ENCODE measurements at regions of chr2 and their contacts with region 1.

Region 1: GRCh38 chr2:175030380-175031271 is 25.4 kb upstream of the CHN1 start:
- DNase-seq: peak; percentile 13 to 63
- H3K4me3 ChIP-seq: no peak overlapping the region
- H3K27ac ChIP-seq: no peak overlapping the region
- H3K4me1 ChIP-seq: no peaks in the 10 kb centered on the region; a peak in 1 of 7 replicates
- H3K27me3 ChIP-seq: no peaks in the 10 kb centered on the region
- CTCF ChIP-seq: peak; percentile 56 to 70 (median 60)
- EP300 ChIP-seq: no peak
- POLR2A ChIP-seq: no peak
- RAD21 ChIP-seq: peak; percentile 84 to 85

Region 2: GRCh38 chr2:174704642-174705041 is 326.0 kb before region 1 on chr2:
- CTCF ChIA-PET with region 1: interaction called, 16 read pairs
- POLR2A ChIA-PET with region 1: no interaction called
- DNase-seq: no peak
- H3K4me3 ChIP-seq: no peak overlapping the region
- H3K27ac ChIP-seq: no peak overlapping the region
- H3K4me1 ChIP-seq: no peaks in the 10 kb centered on the region
- H3K27me3 ChIP-seq: no peaks in the 10 kb centered on the region
- CTCF ChIP-seq: no peak
- EP300 ChIP-seq: no peak
- POLR2A ChIP-seq: no peak
- RAD21 ChIP-seq: no peak

Region 3: GRCh38 chr2:174951745-174952144 is 78.9 kb before region 1 on chr2:
- CTCF ChIA-PET with region 1: no interaction called
- POLR2A ChIA-PET with region 1: no interaction called
- DNase-seq: no peak
- H3K4me3 ChIP-seq: no peak overlapping the region
- H3K27ac ChIP-seq: no peak overlapping the region
- H3K4me1 ChIP-seq: peaks cover 0 to 5% (median 1%) of the 10 kb centered on the region in 4 experiments; a peak in 3 of 7 replicates
- H3K27me3 ChIP-seq: no peaks in the 10 kb centered on the region
- CTCF ChIP-seq: no peak
- EP300 ChIP-seq: no peak
- POLR2A ChIP-seq: no peak
- RAD21 ChIP-seq: no peak

Region 4: DNA sequence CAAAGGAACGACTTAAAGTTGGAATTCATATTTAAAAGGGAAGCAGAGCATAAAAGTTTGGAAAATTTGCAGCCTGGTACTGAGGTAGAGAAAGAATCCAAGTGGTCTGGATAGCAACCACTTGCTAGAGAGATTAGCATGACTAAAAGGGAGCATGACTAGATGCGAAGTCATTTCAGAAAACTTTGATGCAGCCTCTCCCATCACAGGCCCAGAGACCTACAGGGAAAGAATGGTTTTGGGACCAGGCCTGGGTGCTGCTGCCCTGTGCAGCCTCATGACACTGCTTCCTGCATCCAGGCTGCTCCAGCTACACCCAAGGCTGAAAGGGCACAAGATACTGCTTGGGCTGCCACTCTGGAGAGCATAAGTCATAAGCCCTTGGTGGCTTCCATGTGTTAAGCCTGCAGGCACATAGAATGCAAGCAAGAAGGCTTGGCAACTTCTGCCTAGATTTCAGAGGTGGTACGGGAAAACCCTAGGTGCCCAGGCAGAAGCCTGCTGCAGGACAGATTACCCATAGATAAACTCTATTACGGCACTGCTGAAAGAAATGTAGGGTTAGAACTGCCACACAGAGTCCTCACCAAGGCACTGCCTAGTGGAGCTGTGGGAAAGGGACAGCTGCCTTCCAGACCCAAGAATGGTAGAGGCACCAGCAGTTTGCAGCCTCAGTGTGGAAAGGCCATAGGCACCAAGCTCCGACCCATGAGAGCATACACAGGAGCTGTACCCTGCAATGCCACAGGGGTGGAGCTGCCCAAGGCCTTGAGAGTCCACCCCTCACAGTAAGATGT is 12.8 kb before region 1 on chr2:
- CTCF ChIA-PET with region 1: interaction called, 20 read pairs
- POLR2A ChIA-PET with region 1: no interaction called
- DNase-seq: no peak
- H3K4me3 ChIP-seq: no peak overlapping the region
- H3K27ac ChIP-seq: no peak overlapping the region
- H3K4me1 ChIP-seq: no peaks in the 10 kb centered on the region
- H3K27me3 ChIP-seq: no peaks in the 10 kb centered on the region
- CTCF ChIP-seq: no peak
- EP300 ChIP-seq: no peak
- POLR2A ChIP-seq: no peak
- RAD21 ChIP-seq: no peak

Region 5: DNA sequence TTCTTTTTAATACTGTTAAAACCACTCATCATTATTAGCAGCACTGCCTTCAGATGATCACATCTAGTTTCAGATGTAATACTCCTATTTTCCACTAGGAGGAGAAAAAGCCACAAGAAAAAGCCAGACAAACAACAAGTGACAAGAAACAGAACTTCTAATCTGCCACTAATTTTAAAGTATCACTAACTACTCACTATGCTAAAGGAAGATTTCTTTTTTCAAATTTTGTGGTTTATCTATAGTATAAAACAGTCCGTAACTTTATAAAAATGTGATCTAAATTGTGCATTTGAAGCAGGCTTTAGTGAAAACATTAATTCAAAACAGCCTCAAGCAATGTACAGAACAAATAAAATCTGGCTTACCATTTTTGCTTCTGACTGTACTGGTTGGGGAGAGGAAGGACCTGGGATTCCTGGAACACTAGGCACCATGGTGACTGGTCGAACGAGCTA is 80.6 kb after region 1 on chr2:
- CTCF ChIA-PET with region 1: interaction called, 11 read pairs
- POLR2A ChIA-PET with region 1: no interaction called
- DNase-seq: no peak
- H3K4me3 ChIP-seq: no peak overlapping the region
- H3K27ac ChIP-seq: no peak overlapping the region
- H3K4me1 ChIP-seq: no peaks in the 10 kb centered on the region
- H3K27me3 ChIP-seq: no peaks in the 10 kb centered on the region
- CTCF ChIP-seq: peak in 2 of 3 experiments; percentile 20 to 57; a peak in 2 of 4 replicates
- EP300 ChIP-seq: no peak
- POLR2A ChIP-seq: no peak
- RAD21 ChIP-seq: peak; percentile 50 to 59

Measured in H1 (cell line).